ENCODE measurements at regions of chr9 and their contacts with region 1.

Region 1: DNA sequence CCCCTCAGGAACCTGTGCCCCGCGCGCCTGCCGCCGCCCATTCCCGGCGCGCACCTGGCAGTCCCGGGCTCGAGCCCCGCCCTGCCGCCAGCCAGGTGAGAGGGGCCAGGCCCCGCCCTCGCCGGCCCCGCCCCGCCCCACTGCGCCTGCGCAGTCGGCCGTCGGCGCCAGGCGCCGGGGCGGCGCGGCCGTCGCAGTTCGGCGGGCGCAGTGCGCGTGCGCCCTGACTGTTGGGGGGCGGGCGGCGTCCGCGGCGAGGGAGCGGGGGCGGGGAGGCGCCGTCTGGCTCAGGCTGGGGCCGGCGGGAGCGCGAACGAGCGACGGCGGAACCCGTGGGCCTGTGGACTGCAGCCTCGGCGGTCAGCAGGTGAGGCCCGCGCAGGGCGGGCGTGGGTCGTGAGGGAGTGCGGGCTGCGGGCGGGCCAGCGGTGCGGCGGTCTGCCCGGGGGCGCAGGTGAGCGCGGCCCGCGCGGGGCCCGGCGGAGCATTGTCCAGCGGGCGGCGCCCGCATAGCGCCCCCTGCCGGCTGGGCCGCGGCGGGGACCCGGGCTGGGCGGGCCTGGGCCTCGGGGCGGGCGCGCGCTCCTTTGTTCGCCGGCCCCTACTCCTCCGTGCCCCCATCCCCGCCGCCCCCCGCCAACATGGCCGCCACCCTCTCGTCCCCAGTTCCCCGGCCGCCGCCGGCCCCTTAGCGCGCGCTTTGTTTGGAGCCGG is at the start of gene SPIN1:
- DNase-seq: peak; percentile 89 to 95
- ATAC-seq: peak; percentile 88
- H3K4me3 ChIP-seq: peak within 1 kb of the TSS; percentile 100
- H3K27ac ChIP-seq: peak within 1 kb of the TSS; percentile 31 to 90
- H3K4me1 ChIP-seq: peaks cover 3 to 4% of the 10 kb centered on the region in 2 donors
- H3K27me3 ChIP-seq: no peaks in the 10 kb centered on the region
- total RNA-seq, gene SPIN1: 79.9 to 93.3 TPM

Region 2: DNA sequence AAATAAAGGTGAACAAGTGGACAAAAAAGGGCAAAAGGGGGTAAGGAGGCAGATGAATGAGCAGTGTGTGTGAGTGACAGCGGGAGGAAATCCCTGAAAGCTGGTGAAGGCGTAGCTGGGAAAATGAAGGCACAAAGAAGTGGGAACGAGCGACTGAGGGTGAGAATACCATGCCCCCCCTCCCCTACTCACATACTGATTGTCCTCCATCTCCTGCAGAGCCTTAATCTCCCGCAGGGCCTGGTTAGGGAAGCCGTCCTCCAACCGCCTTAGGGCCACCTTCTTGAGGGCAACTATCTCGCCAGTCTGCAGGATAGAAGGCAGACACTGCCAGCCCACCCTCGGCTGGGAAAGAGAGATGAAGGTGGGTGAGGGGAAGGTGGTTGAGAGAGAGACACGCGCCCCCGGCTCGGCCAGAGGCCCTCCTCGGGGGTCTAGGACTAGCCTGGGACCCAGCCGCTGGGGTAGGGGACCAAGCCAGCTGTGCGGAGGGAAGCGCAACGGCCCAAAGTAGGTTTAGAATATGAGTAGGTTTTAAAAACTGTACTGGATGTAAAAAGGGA is 414.5 kb before region 1 on chr9:
- intact Hi-C with region 1: loop called in 1 of 2 experiments (anchors 10 kb)
- DNase-seq: no peak
- ATAC-seq: no peak
- H3K4me3 ChIP-seq: no peak overlapping the region
- H3K27ac ChIP-seq: no peak overlapping the region
- H3K4me1 ChIP-seq: no peaks in the 10 kb centered on the region
- H3K27me3 ChIP-seq: no peaks in the 10 kb centered on the region

Region 3: DNA sequence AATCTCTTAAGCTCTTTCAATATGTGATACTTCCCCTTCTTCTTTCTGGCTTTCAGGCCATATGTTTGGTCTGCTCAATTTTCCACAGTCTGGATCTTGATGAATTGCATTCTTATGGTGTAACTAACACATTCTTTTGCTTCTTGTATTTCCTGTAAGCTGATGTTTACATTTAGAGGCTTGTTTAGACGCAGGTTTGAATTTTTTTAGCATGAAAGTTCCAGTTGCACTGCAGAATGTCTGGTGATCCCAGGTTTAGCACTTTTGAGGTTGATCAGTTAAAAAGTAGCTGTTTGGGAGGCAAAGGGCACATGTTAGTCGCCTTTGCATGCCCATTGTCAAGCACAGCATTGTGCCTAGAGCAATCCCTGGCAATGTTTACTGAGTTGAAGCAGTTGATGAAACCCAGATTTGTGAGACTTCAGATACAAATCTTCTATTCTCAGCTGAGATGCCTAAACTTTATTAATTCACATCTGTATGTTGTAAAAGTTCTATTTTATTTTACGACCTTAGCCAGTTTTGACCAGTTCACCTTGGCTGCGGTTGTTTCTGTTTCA is 190.5 kb before region 1 on chr9:
- intact Hi-C with region 1: loop called (anchors 5 to 10 kb)
- DNase-seq: no peak
- ATAC-seq: no peak
- H3K4me3 ChIP-seq: peak overlapping the region; percentile 26 to 30
- H3K27ac ChIP-seq: no peak overlapping the region
- H3K4me1 ChIP-seq: peaks cover 0 to 4% of the 10 kb centered on the region in 2 donors
- H3K27me3 ChIP-seq: no peaks in the 10 kb centered on the region

Region 4: DNA sequence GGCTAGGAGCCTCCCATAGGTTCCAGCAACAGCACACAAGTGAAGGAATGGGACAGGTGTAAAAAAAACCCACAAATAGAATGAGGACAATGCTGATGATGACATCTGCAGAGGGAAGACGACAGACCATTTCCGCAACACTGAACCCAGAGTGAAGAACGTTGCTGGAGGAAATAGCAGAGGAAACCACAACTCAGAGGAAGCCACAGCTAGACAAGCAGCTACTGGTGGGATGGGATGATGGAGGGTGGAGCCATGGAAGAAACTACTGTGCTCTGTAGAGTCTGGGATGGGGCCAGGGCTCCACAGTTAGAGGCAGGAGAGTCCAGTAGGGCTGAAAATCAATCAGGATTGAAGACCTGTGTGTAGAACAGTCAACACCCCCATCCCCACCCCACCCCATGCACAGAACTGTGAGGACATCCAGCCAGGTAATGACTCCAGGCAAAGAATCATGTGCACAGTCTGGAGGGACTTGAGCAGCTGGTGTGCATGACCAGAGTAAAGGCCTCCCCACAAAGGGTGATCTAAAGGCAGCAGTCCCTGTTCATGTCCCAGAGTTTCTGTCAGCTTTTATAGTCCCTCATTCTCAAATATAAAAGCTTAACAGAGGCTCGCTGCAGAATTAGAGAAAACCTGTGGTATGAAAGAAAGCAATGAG is 65.3 kb before region 1 on chr9:
- intact Hi-C with region 1: no loop called
- DNase-seq: peak in 1 of 2 donors; percentile 7
- ATAC-seq: no peak
- H3K4me3 ChIP-seq: no peak overlapping the region
- H3K27ac ChIP-seq: no peak overlapping the region
- H3K4me1 ChIP-seq: no peaks in the 10 kb centered on the region
- H3K27me3 ChIP-seq: no peaks in the 10 kb centered on the region

Region 5: DNA sequence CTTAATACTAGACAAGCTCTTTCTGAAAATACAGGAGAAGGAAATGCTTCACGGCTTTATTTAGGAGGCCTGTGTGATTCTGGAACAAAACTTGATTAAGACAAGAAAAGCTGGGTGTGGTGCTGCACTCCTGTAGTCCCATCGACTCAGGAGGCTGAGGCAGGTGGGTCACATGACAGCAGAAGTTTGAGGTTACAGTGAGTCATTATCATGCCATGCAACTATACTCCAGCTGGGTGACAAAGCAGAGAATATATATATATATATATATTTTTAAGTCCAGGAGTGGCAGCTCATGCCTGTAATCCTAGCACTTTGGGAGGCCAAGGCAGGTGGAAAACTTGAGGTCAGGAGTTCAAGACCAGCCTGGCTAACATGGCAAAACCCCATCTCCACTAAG is 33.2 kb before region 1 on chr9:
- intact Hi-C with region 1: no loop called
- DNase-seq: no peak
- ATAC-seq: no peak
- H3K4me3 ChIP-seq: no peak overlapping the region
- H3K27ac ChIP-seq: no peak overlapping the region
- H3K4me1 ChIP-seq: no peaks in the 10 kb centered on the region
- H3K27me3 ChIP-seq: no peaks in the 10 kb centered on the region

Region 6: GRCh38 chr9:88534456-88535261 is 146.3 kb after region 1 on chr9 and contains the start of gene NXNL2:
- intact Hi-C with region 1: loop called (anchors 2 kb)
- DNase-seq: peak; percentile 89 to 96
- ATAC-seq: peak; percentile 89
- H3K4me3 ChIP-seq: peak within 1 kb of the TSS; percentile 37 to 80
- H3K27ac ChIP-seq: peak within 1 kb of the TSS in 1 of 2 donors; percentile 96
- H3K4me1 ChIP-seq: no peaks in the 10 kb centered on the region
- H3K27me3 ChIP-seq: no peaks in the 10 kb centered on the region
- total RNA-seq, gene NXNL2: 0.78 to 2.2 TPM

Region 7: DNA sequence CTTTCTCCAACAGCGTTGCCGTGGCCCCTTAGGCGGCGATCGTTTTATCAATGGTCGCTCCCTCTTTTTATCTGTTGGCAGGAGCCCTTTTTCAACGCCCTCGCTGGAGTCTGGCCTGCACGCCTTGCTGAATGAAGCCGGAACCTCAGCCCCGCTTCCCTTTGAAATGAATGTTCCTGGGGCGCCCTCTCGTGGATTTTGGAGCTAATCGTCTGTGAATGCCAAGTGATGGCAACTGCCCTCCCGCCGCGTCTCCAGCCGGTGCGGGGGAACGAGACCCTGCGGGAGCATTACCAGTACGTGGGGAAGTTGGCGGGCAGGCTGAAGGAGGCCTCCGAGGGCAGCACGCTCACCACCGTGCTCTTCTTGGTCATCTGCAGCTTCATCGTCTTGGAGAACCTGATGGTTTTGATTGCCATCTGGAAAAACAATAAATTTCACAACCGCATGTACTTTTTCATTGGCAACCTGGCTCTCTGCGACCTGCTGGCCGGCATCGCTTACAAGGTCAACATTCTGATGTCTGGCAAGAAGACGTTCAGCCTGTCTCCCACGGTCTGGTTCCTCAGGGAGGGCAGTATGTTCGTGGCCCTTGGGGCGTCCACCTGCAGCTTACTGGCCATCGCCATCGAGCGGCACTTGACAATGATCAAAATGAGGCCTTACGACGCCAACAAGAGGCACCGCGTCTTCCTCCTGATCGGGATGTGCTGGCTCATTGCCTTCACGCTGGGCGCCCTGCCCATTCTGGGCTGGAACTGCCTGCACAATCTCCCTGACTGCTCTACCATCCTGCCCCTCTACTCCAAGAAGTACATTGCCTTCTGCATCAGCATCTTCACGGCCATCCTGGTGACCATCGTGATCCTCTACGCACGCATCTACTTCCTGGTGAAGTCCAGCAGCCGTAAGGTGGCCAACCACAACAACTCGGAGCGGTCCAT is 612.9 kb after region 1 on chr9:
- intact Hi-C with region 1: loop called in 1 of 2 experiments (anchors 10 kb)
- DNase-seq: peak; percentile 93 to 95
- ATAC-seq: peak; percentile 80
- H3K4me3 ChIP-seq: no peak overlapping the region
- H3K27ac ChIP-seq: peak overlapping the region in 1 of 2 donors; percentile 64
- H3K4me1 ChIP-seq: peaks cover 0 to 3% of the 10 kb centered on the region in 2 donors
- H3K27me3 ChIP-seq: no peaks in the 10 kb centered on the region